ENCODE measurements at regions of chr13 and their contacts with region 1.

Region 1: DNA sequence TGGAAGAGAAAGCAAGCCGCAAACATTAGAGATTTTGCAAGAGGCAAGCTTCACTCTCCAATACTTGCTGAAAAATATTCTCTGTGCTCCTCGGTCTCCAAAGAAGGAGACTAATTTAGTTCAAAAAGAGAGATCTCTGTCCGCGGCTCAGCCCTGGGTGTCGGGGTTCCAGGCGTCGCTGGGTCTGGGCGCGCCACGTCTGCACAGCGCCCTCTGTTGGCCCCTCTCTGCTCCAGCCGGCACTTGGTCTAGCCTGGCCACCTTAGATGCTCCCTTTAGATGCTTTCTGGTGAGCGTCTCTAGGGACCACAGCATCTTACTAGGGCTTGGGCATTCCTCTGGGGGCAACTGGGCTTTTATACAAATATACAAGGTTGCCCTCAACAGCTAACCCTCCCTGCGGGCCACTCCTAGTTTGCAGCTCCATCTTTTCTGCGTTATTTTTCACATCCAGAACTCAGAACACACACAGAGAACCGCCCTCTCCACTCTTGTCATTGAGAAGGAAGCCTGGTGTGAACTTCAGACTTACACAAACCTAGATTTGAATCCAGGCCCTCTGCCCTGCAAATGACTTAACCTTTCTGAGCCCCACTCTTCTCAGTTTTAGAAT is 78.3 kb downstream of the CYSLTR2 start:
- DNase-seq: peak; percentile 40 to 58 (median 54)
- H3K4me3 ChIP-seq: peak overlapping the region; percentile 2 to 64 (median 4)
- H3K4me3 Mint-ChIP-seq: peak overlapping the region; percentile 81 to 95
- H3K27ac ChIP-seq: peak overlapping the region in 1 of 2 donors; percentile 32
- H3K27ac Mint-ChIP-seq: peak overlapping the region; percentile 50 to 80 (median 75)
- H3K4me1 ChIP-seq: peaks cover 9% of the 10 kb centered on the region in 2 donors
- H3K4me1 Mint-ChIP-seq: peaks cover 18% of the 10 kb centered on the region
- H3K27me3 ChIP-seq: no peaks in the 10 kb centered on the region
- H3K27me3 Mint-ChIP-seq: peaks cover 0 to 2% (median 0%) of the 10 kb centered on the region in 3 donors
- CTCF ChIP-seq: peak; percentile 90

Region 2: GRCh38 chr13:48653472-48653939 is 78.6 kb before region 1 on chr13 and contains the start of gene CYSLTR2:
- intact Hi-C with region 1: loop called in 1 of 2 experiments (anchors 10 kb)
- DNase-seq: peak; percentile 92 to 99 (median 96)
- H3K4me3 ChIP-seq: peak within 1 kb of the TSS; percentile 42 to 91 (median 76)
- H3K4me3 Mint-ChIP-seq: peak within 1 kb of the TSS; percentile 75 to 90
- H3K27ac ChIP-seq: peak within 1 kb of the TSS; percentile 79 to 95
- H3K27ac Mint-ChIP-seq: peak within 1 kb of the TSS; percentile 92 to 100 (median 99)
- H3K4me1 ChIP-seq: peaks cover 56 to 57% of the 10 kb centered on the region in 2 donors
- H3K4me1 Mint-ChIP-seq: peaks cover 66% of the 10 kb centered on the region
- H3K27me3 ChIP-seq: no peaks in the 10 kb centered on the region
- H3K27me3 Mint-ChIP-seq: peaks cover 0 to 2% (median 0%) of the 10 kb centered on the region in 3 donors
- CTCF ChIP-seq: no peak
- polyA plus RNA-seq, gene CYSLTR2: 1.9 to 6.5 (median 4.1) TPM

Region 3: GRCh38 chr13:48660361-48661076 is 71.5 kb before region 1 on chr13:
- intact Hi-C with region 1: loop called (anchors 10 kb)
- DNase-seq: peak; percentile 81 to 91 (median 87)
- H3K4me3 ChIP-seq: peak overlapping the region in 1 of 3 experiments; percentile 49
- H3K4me3 Mint-ChIP-seq: peak overlapping the region; percentile 53 to 79
- H3K27ac ChIP-seq: peak overlapping the region; percentile 70 to 87
- H3K27ac Mint-ChIP-seq: peak overlapping the region; percentile 97 to 99 (median 98)
- H3K4me1 ChIP-seq: peaks cover 58 to 60% of the 10 kb centered on the region in 2 donors
- H3K4me1 Mint-ChIP-seq: peaks cover 53% of the 10 kb centered on the region
- H3K27me3 ChIP-seq: no peaks in the 10 kb centered on the region
- H3K27me3 Mint-ChIP-seq: peaks cover 0 to 3% (median 0%) of the 10 kb centered on the region in 3 donors
- CTCF ChIP-seq: no peak

Region 4: DNA sequence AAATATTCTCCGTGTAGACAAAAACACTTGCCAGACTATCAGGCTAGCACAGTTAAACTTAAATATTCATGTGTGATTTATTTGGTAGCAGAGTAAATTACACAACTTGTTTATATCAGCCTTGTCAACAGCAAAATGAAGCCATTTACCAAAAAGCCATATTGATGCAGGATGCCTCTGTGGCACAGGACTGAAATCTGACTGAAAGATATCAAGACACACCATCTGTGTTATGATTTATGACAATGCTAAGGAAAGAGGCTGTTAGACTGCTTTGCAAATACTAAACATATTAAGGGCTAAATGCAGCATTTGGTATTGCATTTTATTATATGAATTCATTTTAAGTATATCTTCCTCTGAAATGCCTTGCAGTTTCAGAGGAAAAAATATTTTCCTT is 198.9 kb after region 1 on chr13:
- intact Hi-C with region 1: no loop called
- DNase-seq: no peak
- H3K4me3 ChIP-seq: no peak overlapping the region
- H3K4me3 Mint-ChIP-seq: no peak overlapping the region
- H3K27ac ChIP-seq: no peak overlapping the region
- H3K27ac Mint-ChIP-seq: no peak overlapping the region
- H3K4me1 ChIP-seq: no peaks in the 10 kb centered on the region
- H3K4me1 Mint-ChIP-seq: peaks cover 1% of the 10 kb centered on the region
- H3K27me3 ChIP-seq: no peaks in the 10 kb centered on the region
- H3K27me3 Mint-ChIP-seq: no peaks in the 10 kb centered on the region
- CTCF ChIP-seq: no peak

Measured in CD14-positive monocyte (primary cell).